ENCODE measurements at regions of chr3 and their contacts with region 1.

Region 1: GRCh38 chr3:37722477-37722876 is 139.2 kb upstream of the CTDSPL start:
- DNase-seq: no peak
- H3K4me3 ChIP-seq: no peak overlapping the region
- H3K27ac ChIP-seq: no peak overlapping the region
- H3K4me1 ChIP-seq: no peaks in the 10 kb centered on the region
- CTCF ChIP-seq: no peak

Region 2: GRCh38 chr3:37693511-37694283 is 28.8 kb before region 1 on chr3:
- CTCF ChIA-PET with region 1: no interaction called
- POLR2A ChIA-PET with region 1: no interaction called
- intact Hi-C with region 1: no loop called
- DNase-seq: no peak
- H3K4me3 ChIP-seq: no peak overlapping the region
- H3K27ac ChIP-seq: no peak overlapping the region
- H3K4me1 ChIP-seq: no peaks in the 10 kb centered on the region
- CTCF ChIP-seq: no peak

Region 3: DNA sequence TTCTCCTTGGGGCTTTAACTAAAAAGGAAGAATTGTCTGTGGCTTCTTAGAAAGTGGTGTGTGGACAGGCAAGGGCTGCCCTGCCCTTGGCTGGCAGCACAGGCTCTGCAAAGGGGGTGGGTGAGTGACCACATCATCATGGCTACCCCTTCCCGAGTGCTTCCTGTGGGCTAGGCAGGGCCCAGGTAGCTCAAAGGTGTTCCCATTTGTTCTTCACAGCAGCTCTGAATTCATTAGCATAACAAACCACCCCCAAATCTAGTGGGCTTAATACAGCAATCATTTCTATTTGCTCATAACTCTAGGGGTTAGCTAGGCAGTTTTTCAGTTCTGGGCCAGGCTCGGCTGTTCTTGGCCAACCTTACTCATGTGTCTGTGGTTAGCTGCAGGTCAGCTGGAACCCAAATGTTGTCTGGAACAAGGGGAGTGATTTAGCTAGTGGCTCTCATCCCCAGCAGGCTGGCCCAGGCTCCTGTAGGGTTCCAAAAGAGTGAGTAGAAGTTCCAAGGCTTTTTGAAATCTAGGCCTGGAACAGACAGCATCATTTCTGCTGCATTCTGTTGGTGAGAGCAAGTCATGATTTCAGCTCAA is 14.6 kb before region 1 on chr3:
- CTCF ChIA-PET with region 1: no interaction called
- POLR2A ChIA-PET with region 1: no interaction called
- intact Hi-C with region 1: no loop called
- DNase-seq: no peak
- H3K4me3 ChIP-seq: no peak overlapping the region
- H3K27ac ChIP-seq: no peak overlapping the region
- H3K4me1 ChIP-seq: peaks cover 9% of the 10 kb centered on the region
- CTCF ChIP-seq: no peak

Region 4: GRCh38 chr3:37739579-37740290 is 17.3 kb after region 1 on chr3:
- CTCF ChIA-PET with region 1: interaction called, 12 read pairs
- POLR2A ChIA-PET with region 1: no interaction called
- intact Hi-C with region 1: no loop called
- DNase-seq: no peak
- H3K4me3 ChIP-seq: no peak overlapping the region
- H3K27ac ChIP-seq: no peak overlapping the region
- H3K4me1 ChIP-seq: peaks cover 14% of the 10 kb centered on the region
- CTCF ChIP-seq: no peak

Measured in OCI-LY7 (cell line).